ENCODE measurements at regions of chr22 and their contacts with region 1.

Region 1: DNA sequence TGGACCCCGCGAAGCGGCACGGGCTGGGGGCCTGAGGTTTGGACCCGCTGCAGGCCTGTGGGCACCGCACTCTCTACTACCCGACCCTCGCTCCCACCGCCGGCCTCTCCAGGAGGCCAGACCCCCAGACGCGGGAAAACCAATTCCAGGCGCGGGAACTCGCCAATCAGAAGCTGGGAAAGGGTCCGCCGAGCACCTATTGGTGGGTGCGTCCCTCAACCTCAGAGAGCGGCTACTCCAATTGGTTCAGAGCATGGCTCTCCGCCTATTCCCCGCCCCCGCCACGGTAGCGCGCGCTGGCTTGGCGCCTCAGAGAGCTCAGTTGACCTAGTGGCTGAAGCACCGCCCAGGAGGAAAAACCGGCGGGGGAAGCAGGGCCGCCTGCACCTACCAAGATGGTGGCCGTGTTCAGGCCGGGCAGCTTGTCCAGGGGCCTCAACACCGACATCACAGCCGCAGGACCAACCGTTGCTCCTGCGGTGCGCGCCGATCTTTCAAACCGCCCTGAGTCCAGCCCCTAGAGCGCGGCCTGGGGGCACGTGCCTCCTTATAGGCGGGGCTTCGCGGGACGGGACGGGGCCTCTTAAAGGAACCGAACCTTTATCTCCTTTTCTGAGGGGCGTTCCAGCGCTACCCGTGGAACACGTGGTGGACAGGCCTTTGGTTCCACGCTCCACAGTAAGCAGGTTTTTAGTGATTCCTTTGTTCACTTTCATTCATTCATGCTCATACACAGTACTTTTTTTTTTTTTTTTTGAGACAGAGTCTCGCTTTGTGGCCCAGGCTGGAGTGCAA is at the start of gene CENPM:
- DNase-seq: peak; percentile 93
- H3K4me3 ChIP-seq: peak within 1 kb of the TSS; percentile 62 to 77 (median 69)
- H3K27ac ChIP-seq: peak within 1 kb of the TSS; percentile 65 to 74 (median 69)
- H3K4me1 ChIP-seq: peaks cover 6 to 24% (median 13%) of the 10 kb centered on the region in 4 donors
- H3K27me3 ChIP-seq: no peaks in the 10 kb centered on the region
- CTCF ChIP-seq: peak in 2 of 5 experiments; percentile 6 to 39
- EP300 ChIP-seq: no peak
- POLR2A ChIP-seq: no peak
- total RNA-seq, gene CENPM: 6.0 to 22.9 (median 11.0) TPM in 3 of 4 donors, not detected in the other

Region 2: DNA sequence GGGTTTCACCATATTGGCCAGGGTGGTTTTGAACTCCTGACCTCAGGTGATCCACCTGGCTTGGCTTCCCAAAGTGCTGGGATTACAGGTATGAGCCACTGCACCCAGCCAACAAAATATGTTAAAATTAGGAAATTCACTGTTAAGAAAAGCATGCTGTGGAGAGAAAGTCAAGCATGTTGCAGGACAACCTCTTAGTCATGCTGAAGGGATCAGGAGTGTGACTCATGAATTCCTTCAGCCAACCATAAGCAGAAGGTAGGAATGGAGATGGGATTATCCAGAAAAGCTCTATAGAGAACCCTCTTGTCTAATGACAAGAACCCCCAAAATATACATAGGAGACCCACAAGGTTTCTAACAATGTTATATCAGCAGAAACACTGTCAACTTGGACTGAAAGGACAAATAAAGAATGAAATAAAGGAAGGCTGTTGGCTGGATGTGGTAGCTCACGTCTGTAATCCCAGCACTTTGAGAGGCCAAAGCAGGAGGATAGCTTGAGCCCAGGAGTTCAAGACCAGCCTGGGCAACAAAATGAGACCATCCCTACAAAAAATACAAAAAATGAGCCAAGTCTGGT is 1326.3 kb before region 1 on chr22:
- in situ Hi-C with region 1: no loop called
- intact Hi-C with region 1: no loop called
- DNase-seq: no peak
- H3K4me3 ChIP-seq: no peak overlapping the region
- H3K27ac ChIP-seq: no peak overlapping the region
- H3K4me1 ChIP-seq: peaks cover 0 to 10% (median 0%) of the 10 kb centered on the region in 4 donors
- H3K27me3 ChIP-seq: no peaks in the 10 kb centered on the region
- CTCF ChIP-seq: no peak
- EP300 ChIP-seq: no peak
- POLR2A ChIP-seq: no peak

Region 3: GRCh38 chr22:41425660-41426365 is 521.0 kb before region 1 on chr22:
- in situ Hi-C with region 1: no loop called
- intact Hi-C with region 1: no loop called
- DNase-seq: no peak
- H3K4me3 ChIP-seq: no peak overlapping the region
- H3K27ac ChIP-seq: no peak overlapping the region
- H3K4me1 ChIP-seq: no peaks in the 10 kb centered on the region
- H3K27me3 ChIP-seq: no peaks in the 10 kb centered on the region
- CTCF ChIP-seq: no peak
- EP300 ChIP-seq: no peak
- POLR2A ChIP-seq: no peak

Region 4: DNA sequence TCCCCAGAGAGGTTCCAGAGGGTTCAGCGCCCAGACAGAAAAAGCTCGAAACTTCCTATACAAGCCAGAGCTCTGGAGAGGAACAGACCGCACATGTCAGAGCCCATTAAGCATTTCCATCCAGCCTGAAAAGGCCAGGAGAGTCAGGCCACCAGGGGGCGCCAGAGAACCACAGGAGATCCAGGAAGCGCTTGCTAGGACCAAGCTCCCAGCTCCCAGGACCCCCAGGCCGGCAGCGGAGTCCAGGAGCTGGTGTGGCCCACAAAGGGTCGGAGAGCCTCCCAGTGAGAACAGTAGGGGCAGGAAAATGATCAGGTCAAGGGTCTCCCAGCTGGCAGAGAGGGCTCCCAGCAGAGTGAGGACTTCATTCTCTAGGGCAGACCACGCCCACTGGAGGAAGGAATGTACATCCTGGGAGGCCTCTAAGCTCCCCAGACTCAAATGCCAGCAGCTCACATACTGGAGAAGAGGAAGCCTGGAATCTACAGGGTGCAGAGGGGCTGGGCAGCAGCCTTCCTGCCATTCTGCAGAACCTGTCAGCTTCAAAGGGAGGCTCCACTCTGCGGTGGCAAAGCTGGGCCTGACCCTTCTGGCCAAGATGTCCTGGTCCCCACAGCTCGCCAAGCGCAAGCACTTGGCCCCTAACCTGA is 249.6 kb before region 1 on chr22:
- in situ Hi-C with region 1: loop called in 3 of 4 experiments (anchors 5 to 10 kb)
- intact Hi-C with region 1: loop called (anchors 5 kb)
- DNase-seq: peak; percentile 95
- H3K4me3 ChIP-seq: peak overlapping the region in 1 of 4 donors; percentile 42
- H3K27ac ChIP-seq: peak overlapping the region; percentile 30 to 67 (median 40)
- H3K4me1 ChIP-seq: peaks cover 4 to 18% (median 14%) of the 10 kb centered on the region in 4 donors
- H3K27me3 ChIP-seq: no peaks in the 10 kb centered on the region
- CTCF ChIP-seq: peak; percentile 98 to 100 (median 99)
- EP300 ChIP-seq: no peak
- POLR2A ChIP-seq: no peak

Region 5: GRCh38 chr22:41800348-41801146 is 146.3 kb before region 1 on chr22 and contains the start of gene CCDC134:
- in situ Hi-C with region 1: loop called in 2 of 4 experiments (anchors 10 to 25 kb)
- intact Hi-C with region 1: no loop called
- DNase-seq: peak; percentile 94
- H3K4me3 ChIP-seq: peak within 1 kb of the TSS; percentile 44 to 91 (median 74)
- H3K27ac ChIP-seq: peak within 1 kb of the TSS; percentile 86 to 91 (median 88)
- H3K4me1 ChIP-seq: peaks cover 10 to 23% (median 18%) of the 10 kb centered on the region in 4 donors
- H3K27me3 ChIP-seq: no peaks in the 10 kb centered on the region
- CTCF ChIP-seq: peak in 1 of 5 experiments; percentile 8
- EP300 ChIP-seq: no peak
- POLR2A ChIP-seq: peak; percentile 92
- total RNA-seq, gene CCDC134: 5.9 to 9.8 TPM in 2 of 4 donors, not detected in the others

Region 6: DNA sequence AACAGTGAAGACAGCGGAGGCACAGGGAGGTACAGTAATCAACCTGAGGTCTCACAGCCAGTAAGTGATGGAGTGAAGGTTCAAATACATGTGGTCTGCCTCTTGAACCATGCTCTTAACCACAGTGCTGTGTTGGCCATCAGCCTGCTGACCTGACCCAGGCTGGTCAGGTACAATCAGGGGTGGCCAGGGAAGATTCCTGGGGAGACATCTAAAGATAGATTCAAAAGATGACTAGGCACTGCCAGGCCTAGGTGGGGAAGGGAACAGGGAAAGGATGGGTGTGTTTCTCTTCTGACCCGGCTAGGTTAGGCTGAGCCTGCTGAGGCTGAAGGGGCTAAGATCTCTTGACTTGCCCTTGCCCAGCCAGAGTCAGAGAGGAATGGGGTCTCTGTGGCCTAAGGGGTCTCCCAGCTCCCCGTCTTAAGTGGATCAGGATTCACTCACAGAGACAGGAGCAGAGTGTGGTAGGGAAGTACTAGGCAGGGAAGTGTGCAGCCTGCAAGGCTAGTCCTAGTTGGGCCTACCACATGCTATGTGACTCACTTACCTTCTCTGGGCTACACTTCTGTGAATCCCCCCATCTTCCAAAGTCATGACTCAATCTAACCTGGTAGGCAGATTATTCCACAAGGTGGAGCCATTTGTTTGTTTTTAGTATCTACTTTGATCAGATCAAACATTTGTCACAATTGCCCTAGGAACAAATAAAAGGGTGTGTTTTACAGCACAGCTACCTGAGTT is 124.3 kb before region 1 on chr22:
- in situ Hi-C with region 1: loop called in 3 of 4 experiments (anchors 10 to 25 kb)
- intact Hi-C with region 1: loop called (anchors 10 kb)
- DNase-seq: no peak
- H3K4me3 ChIP-seq: no peak overlapping the region
- H3K27ac ChIP-seq: peak overlapping the region in 1 of 4 donors; percentile 36
- H3K4me1 ChIP-seq: peaks cover 9 to 30% (median 21%) of the 10 kb centered on the region in 4 donors
- H3K27me3 ChIP-seq: no peaks in the 10 kb centered on the region
- CTCF ChIP-seq: peak; percentile 46 to 87 (median 59)
- EP300 ChIP-seq: no peak
- POLR2A ChIP-seq: no peak

Region 7: GRCh38 chr22:42180349-42180842 is 233.6 kb after region 1 on chr22:
- in situ Hi-C with region 1: no loop called
- intact Hi-C with region 1: no loop called
- DNase-seq: peak; percentile 16
- H3K4me3 ChIP-seq: no peak overlapping the region
- H3K27ac ChIP-seq: peak overlapping the region; percentile 16 to 48 (median 42)
- H3K4me1 ChIP-seq: peaks cover 0 to 47% (median 31%) of the 10 kb centered on the region in 4 donors
- H3K27me3 ChIP-seq: no peaks in the 10 kb centered on the region
- CTCF ChIP-seq: no peak
- EP300 ChIP-seq: no peak
- POLR2A ChIP-seq: no peak

Region 8: DNA sequence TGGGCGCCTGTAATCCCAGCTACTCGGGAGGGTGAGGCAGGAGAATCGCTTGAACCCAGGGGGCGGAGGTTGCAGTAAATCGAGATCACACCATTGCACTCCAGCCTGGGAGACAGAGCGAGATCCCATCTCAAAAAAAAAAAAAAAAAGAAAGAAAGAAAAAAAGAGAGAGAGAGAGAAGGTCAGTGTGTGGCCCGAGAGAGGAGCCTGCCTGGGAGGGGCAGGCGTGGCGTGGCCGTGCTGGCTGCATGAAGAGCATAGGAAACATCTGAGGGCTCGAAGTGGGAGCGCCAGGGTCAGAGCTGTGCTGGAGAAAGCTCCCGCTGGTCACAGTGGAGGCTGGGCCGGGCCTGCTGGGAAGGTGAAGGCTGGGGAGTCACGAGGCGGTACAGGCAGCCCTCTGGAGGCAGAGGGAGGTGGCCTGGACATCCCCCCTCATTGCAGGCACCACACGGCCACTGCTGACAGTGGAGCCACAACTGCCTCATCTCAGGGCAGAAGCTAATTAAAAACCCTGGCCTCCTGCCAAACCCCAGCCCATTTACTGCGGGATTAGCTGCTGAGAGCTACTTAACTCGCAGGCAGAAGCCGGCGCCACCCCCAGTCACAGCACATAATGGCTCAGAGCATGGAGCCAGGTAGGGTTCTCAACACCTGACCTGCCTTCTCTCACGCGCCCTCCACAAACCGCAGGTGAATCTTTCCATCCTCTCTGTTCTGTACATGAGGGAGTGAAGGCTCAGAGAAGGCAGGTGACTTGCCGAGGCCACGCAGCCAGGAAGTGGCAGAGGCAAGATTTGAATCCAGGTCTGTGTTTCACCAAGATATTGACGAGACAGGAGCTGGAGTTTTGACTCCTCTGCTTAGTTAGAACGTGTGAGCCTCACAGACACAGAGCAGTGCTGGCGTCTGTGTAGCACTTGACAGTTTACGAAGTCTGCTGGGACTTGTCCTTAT is 452.8 kb after region 1 on chr22:
- in situ Hi-C with region 1: no loop called
- intact Hi-C with region 1: no loop called
- DNase-seq: peak; percentile 40
- H3K4me3 ChIP-seq: no peak overlapping the region
- H3K27ac ChIP-seq: no peak overlapping the region
- H3K4me1 ChIP-seq: peaks cover 0 to 5% (median 1%) of the 10 kb centered on the region in 4 donors
- H3K27me3 ChIP-seq: no peaks in the 10 kb centered on the region
- CTCF ChIP-seq: no peak
- EP300 ChIP-seq: no peak
- POLR2A ChIP-seq: no peak

Measured in transverse colon (tissue), 4 donors.